Posterior vena cava (tissue), 2 donors: ENCODE measurements at regions of chr2 and their contacts with region 1.

Region 1: GRCh38 chr2:223613017-223613950 is 11.1 kb upstream of the SCG2 start:
- DNase-seq: peak; percentile 94

Region 2: GRCh38 chr2:222982010-222982908 is 631.0 kb before region 1 on chr2:
- intact Hi-C with region 1: loop called in 1 of 2 experiments (anchors 10 kb)
- DNase-seq: no peak

Region 3: GRCh38 chr2:224658780-224659405 is 1045.6 kb after region 1 on chr2:
- intact Hi-C with region 1: no loop called
- DNase-seq: no peak